Activated T-helper 1 cell treated with anti-CD3 and anti-CD28 coated beads, Interleukin-12 subunit alpha, Interleukin-12 subunit beta, Interleukin-2, Interleukin-4 antibody, amounts not matched to agents 30 ng/mL and 10 ng/mL and 1 ng/mL, durations not matched to agents 14 hours and 24 hours and 36 hours (primary cell): ENCODE measurements at regions of chr19 and their contacts with region 1.

Region 1: DNA sequence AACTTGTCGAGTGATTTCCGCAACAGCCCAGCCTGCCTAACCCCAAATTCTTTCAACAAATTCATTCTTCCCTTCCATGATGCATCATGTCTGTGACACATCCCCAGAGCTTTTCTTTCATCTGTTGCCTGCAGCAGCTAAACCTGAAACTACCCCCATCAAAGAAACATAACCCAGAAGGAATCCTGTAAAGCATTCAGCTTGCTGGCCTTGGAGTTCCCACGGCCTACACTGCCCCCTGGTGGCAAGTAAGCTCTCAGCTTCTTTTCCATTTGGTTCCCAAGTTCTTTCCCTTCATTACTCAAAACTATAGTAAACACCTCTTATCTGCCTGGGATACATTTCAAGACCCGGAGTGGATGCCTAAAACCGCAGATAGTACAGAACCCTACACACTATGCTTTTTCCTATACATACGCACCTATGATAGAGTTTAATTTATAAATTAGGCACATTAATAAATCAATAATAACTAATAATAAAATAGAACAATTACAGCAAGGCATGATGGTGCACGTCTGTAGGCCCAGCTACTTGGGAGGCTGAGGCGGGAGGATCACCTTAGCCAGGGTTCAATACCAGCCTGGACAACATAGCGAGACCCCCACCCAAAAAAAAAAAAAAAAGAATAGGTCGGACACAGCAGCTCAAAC is 7.4 kb downstream of the ETHE1 start:
- DNase-seq: peak; percentile 63
- H3K4me3 Mint-ChIP-seq: peak overlapping the region; percentile 1
- H3K27ac Mint-ChIP-seq: peak overlapping the region; percentile 32
- H3K4me1 Mint-ChIP-seq: peaks cover 14% of the 10 kb centered on the region
- H3K27me3 Mint-ChIP-seq: no peaks in the 10 kb centered on the region

Region 2: DNA sequence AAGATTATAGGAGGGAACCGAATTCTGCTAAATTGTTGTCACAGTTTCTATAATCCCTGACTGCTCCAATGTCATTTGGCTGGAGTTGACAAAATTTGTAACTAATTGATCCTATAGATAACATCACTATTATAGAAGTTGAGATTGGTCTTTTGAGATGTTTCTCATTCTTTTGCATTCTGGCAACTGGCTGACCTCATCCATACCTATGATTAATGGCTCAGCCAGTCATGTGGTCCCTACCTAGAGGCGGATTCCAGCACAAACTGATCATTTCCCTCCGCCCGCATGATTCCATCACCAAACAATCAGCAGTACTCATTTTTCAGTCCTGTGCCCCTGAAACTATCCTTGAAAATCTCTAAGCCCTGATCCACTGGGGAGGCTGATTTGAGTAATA is 441.3 kb before region 1 on chr19:
- intact Hi-C with region 1: no loop called
- DNase-seq: no peak
- H3K4me3 Mint-ChIP-seq: no peak overlapping the region
- H3K27ac Mint-ChIP-seq: no peak overlapping the region
- H3K4me1 Mint-ChIP-seq: no peaks in the 10 kb centered on the region
- H3K27me3 Mint-ChIP-seq: peaks cover 1% of the 10 kb centered on the region

Region 3: GRCh38 chr19:43430142-43430710 is 89.3 kb before region 1 on chr19:
- intact Hi-C with region 1: loop called (anchors 1 kb)
- DNase-seq: no peak
- H3K4me3 Mint-ChIP-seq: peak overlapping the region; percentile 30
- H3K27ac Mint-ChIP-seq: peak overlapping the region; percentile 44
- H3K4me1 Mint-ChIP-seq: peaks cover 29% of the 10 kb centered on the region
- H3K27me3 Mint-ChIP-seq: peaks cover 9% of the 10 kb centered on the region

Region 4: GRCh38 chr19:43541920-43542650 is 22.5 kb after region 1 on chr19:
- intact Hi-C with region 1: no loop called
- DNase-seq: no peak
- H3K4me3 Mint-ChIP-seq: no peak overlapping the region
- H3K27ac Mint-ChIP-seq: no peak overlapping the region
- H3K4me1 Mint-ChIP-seq: no peaks in the 10 kb centered on the region
- H3K27me3 Mint-ChIP-seq: no peaks in the 10 kb centered on the region